ENCODE measurements at regions of chr4 and their contacts with region 1.

Region 1: GRCh38 chr4:132540284-132541173 is 608.6 kb upstream of the PCDH10 start:
- DNase-seq: no peak
- H3K4me3 Mint-ChIP-seq: no peak overlapping the region
- H3K27ac Mint-ChIP-seq: no peak overlapping the region
- H3K4me1 Mint-ChIP-seq: no peaks in the 10 kb centered on the region
- H3K27me3 Mint-ChIP-seq: no peaks in the 10 kb centered on the region

Region 2: GRCh38 chr4:132572210-132572609 is 31.7 kb after region 1 on chr4:
- intact Hi-C with region 1: loop called (anchors 5 kb)
- DNase-seq: no peak
- H3K4me3 Mint-ChIP-seq: no peak overlapping the region
- H3K27ac Mint-ChIP-seq: no peak overlapping the region
- H3K4me1 Mint-ChIP-seq: no peaks in the 10 kb centered on the region
- H3K27me3 Mint-ChIP-seq: no peaks in the 10 kb centered on the region